Vagina (tissue), 2 donors: ENCODE measurements at regions of chr7 and their contacts with region 1.

Region 1: GRCh38 chr7:104883718-104884452 is 130.1 kb upstream of the KMT2E start:
- DNase-seq: no peak
- H3K4me3 ChIP-seq: peak overlapping the region in 1 of 2 donors; percentile 4
- H3K27ac ChIP-seq: no peak overlapping the region
- H3K4me1 ChIP-seq: peaks cover 6% of the 10 kb centered on the region
- H3K27me3 ChIP-seq: no peaks in the 10 kb centered on the region
- CTCF ChIP-seq: peak; percentile 58 to 94 (median 82)
- POLR2A ChIP-seq: no peak

Region 2: GRCh38 chr7:104923010-104923421 is 39.1 kb after region 1 on chr7:
- intact Hi-C with region 1: loop called (anchors 5 kb)
- DNase-seq: no peak
- H3K4me3 ChIP-seq: no peak overlapping the region
- H3K27ac ChIP-seq: peak overlapping the region; percentile 56
- H3K4me1 ChIP-seq: peaks cover 13% of the 10 kb centered on the region
- H3K27me3 ChIP-seq: no peaks in the 10 kb centered on the region
- CTCF ChIP-seq: peak in 2 of 3 experiments; percentile 49 to 75
- POLR2A ChIP-seq: no peak

Region 3: DNA sequence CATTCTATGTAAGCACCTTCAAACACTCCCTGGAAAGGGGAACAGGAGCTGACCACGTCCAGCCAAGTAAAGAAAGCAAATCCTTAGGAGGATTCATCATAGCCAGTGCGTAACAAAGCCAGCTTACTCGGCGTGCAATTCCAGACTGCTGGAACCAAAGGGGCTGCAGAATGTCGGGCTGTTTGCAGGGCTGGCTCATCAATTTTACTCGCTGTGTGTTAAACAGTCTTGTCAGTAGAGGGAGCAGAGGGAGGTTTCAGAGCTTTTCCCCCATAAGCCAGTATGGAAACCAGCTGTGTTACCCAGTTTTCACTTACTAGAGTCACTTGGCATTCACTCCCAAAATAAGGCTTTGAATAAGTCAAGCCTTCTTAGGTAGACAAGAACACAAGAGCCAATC is 257.2 kb after region 1 on chr7:
- intact Hi-C with region 1: no loop called
- DNase-seq: no peak
- H3K4me3 ChIP-seq: no peak overlapping the region
- H3K27ac ChIP-seq: no peak overlapping the region
- H3K4me1 ChIP-seq: no peaks in the 10 kb centered on the region
- H3K27me3 ChIP-seq: no peaks in the 10 kb centered on the region
- CTCF ChIP-seq: no peak
- POLR2A ChIP-seq: no peak